Activated CD4-positive, alpha-beta T cell treated with anti-CD3 and anti-CD28 coated beads for 36 hours (primary cell): ENCODE measurements at regions of chr13 and their contacts with region 1.

Region 1: DNA sequence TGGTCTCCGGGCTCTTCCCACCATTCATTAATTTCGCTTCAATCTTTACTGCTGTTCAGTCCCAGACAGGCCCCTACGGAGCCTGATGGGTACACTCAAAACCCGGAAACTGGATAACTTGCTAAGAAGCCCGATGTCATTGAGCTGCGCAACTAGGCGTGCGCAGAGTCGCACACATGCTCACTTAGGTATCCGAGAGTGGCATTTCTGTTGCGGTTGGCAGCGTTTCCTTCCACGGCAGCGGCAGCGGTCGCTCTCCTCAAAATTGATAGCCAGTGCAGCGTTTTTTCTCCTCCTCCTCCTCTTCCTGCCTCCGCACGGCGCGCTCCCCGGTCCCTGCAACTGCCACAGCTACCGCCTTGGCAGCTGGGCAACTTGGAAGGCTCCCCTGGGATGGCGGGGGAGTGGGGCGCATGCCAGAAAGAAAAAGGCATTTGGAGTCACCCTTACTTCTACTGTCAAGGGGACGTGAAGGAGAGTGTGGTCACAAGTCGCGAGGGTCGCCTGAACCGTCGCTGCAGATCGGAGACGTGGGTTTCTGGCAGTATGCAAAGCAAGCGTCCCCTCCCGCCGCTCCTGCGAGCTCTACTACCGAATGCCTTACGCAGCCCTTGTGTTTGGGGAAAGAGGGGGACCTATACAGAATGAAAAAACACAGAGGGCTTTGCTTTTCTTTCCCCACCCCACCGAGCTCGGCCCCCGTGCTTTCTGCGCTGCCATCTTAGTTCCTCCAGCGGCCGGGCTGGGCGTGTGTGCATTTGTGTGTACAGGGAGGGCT is 2.4 kb upstream of the MYCBP2 start:
- DNase-seq: peak; percentile 96
- ATAC-seq: peak; percentile 69
- H3K4me3 Mint-ChIP-seq: peak overlapping the region; percentile 95
- H3K27ac Mint-ChIP-seq: peak overlapping the region; percentile 96
- H3K4me1 Mint-ChIP-seq: peaks cover 42% of the 10 kb centered on the region
- H3K27me3 Mint-ChIP-seq: no peaks in the 10 kb centered on the region

Region 2: DNA sequence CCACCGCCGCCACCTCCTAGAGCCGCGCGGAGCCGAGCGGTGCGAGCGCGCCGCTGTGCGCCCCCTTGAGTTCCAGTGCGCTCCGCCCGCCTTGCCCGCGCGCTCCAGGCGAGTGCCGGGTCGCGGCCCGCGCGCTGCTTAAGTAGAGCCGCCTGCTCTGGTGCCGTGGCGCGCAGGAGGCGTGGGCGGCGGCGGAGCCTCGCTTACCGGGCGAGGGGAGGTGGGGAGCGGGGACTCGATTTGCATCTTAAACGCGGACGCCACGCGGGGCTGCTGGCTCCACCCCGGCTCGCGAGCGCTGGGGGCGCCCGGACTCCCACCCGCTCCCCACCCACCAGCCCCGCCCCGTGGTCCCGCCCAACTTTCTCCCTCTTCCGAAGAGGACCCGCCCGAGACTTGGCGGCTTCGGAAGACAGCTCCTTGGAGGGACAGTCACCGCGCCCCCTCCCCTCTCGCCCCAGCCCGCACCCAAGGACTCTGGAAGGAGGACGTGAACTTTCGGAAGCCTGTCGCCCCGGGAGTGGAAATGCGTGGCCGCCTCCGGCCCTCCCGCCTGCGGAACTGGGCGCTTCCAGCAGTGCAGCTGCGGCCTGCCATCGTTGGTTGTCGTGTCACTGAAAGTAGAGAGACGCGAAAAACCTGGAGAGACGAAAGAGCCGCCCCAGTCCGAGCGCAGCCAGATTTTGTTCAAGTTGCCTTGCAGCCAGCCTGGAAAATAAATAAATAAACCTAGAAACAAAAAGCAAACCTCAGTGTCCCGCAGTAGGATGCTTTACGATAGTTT is 442.8 kb before region 1 on chr13 and contains the start of gene KCTD12:
- CTCF ChIA-PET with region 1: no interaction called
- POLR2A ChIA-PET with region 1: no interaction called
- intact Hi-C with region 1: loop called in 1 of 2 experiments (anchors 1 kb)
- DNase-seq: peak; percentile 86
- ATAC-seq: peak; percentile 78
- H3K4me3 Mint-ChIP-seq: peak within 1 kb of the TSS; percentile 93
- H3K27ac Mint-ChIP-seq: peak within 1 kb of the TSS; percentile 90
- H3K4me1 Mint-ChIP-seq: peaks cover 29% of the 10 kb centered on the region
- H3K27me3 Mint-ChIP-seq: peaks cover 8% of the 10 kb centered on the region
- total RNA-seq, gene KCTD12: 9.9 to 11.1 TPM

Region 3: GRCh38 chr13:77026818-77027585 is 302.3 kb before region 1 on chr13 and contains the start of gene FBXL3:
- CTCF ChIA-PET with region 1: interaction called, 3 read pairs
- POLR2A ChIA-PET with region 1: interaction called, 3 read pairs
- intact Hi-C with region 1: loop called (anchors 1 to 5 kb)
- DNase-seq: peak; percentile 89
- ATAC-seq: peak; percentile 59
- H3K4me3 Mint-ChIP-seq: peak within 1 kb of the TSS; percentile 92
- H3K27ac Mint-ChIP-seq: peak within 1 kb of the TSS; percentile 96
- H3K4me1 Mint-ChIP-seq: peaks cover 47% of the 10 kb centered on the region
- H3K27me3 Mint-ChIP-seq: peaks cover 2% of the 10 kb centered on the region
- total RNA-seq, gene FBXL3: 28.4 to 31.6 TPM

Region 4: DNA sequence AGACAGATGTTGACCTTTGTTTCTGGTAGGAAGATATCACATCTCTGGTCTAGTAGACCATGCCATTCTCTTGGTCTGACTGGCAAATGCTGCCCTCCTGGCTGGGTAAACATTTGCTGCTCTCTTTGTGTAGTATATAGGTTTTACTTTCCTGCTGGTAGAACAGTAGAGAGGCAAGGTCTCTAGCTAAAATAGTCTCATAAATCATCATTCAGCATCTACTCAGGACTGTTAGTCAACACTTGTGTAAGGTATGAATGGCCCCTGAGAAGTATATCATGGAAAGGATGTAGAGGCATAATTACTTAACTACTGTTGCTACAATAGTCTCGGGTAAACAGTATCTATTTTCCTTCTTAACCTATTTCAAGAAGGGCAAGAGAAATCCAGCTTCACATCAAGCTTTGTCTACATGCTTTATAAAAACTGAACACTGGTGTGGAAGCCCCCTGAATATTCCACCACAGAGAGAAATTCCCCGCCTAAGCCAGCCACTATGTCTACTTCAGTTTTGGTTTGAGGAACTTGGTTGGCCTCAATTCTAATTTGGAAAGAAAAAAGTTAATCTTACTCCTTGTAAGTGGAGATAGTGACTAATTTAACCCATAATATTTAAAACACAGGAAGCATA is 15.9 kb after region 1 on chr13:
- CTCF ChIA-PET with region 1: interaction called, 5 read pairs
- POLR2A ChIA-PET with region 1: interaction called, 8 read pairs
- intact Hi-C with region 1: loop called (anchors 1 kb)
- DNase-seq: peak; percentile 33
- ATAC-seq: peak; percentile 90
- H3K4me3 Mint-ChIP-seq: peak overlapping the region; percentile 11
- H3K27ac Mint-ChIP-seq: peak overlapping the region; percentile 72
- H3K4me1 Mint-ChIP-seq: peaks cover 15% of the 10 kb centered on the region
- H3K27me3 Mint-ChIP-seq: no peaks in the 10 kb centered on the region

Region 5: DNA sequence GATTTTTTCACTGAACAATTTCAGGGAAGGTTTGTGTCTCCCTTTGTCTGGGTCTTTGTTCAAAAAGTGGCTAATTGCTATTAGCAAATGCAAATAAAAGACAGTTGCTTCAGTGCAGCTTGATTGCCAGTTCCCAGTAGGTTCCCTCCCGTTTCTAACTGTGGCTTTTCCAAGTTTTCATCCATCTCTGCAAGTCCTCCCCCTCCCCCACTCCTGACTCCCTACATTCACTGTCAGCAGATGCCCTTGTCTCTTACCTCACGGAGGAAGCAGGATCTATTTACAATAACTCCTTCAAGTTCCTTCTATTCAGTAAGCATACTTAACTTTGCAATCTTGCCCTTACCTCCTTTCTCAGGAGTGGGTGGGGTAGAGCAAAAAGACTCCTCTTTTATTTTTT is 150.7 kb after region 1 on chr13:
- CTCF ChIA-PET with region 1: interaction called, 25 read pairs
- POLR2A ChIA-PET with region 1: interaction called, 10 read pairs
- intact Hi-C with region 1: loop called (anchors 1 kb)
- DNase-seq: no peak
- ATAC-seq: no peak
- H3K4me3 Mint-ChIP-seq: no peak overlapping the region
- H3K27ac Mint-ChIP-seq: no peak overlapping the region
- H3K4me1 Mint-ChIP-seq: peaks cover 14% of the 10 kb centered on the region
- H3K27me3 Mint-ChIP-seq: no peaks in the 10 kb centered on the region

Region 6: DNA sequence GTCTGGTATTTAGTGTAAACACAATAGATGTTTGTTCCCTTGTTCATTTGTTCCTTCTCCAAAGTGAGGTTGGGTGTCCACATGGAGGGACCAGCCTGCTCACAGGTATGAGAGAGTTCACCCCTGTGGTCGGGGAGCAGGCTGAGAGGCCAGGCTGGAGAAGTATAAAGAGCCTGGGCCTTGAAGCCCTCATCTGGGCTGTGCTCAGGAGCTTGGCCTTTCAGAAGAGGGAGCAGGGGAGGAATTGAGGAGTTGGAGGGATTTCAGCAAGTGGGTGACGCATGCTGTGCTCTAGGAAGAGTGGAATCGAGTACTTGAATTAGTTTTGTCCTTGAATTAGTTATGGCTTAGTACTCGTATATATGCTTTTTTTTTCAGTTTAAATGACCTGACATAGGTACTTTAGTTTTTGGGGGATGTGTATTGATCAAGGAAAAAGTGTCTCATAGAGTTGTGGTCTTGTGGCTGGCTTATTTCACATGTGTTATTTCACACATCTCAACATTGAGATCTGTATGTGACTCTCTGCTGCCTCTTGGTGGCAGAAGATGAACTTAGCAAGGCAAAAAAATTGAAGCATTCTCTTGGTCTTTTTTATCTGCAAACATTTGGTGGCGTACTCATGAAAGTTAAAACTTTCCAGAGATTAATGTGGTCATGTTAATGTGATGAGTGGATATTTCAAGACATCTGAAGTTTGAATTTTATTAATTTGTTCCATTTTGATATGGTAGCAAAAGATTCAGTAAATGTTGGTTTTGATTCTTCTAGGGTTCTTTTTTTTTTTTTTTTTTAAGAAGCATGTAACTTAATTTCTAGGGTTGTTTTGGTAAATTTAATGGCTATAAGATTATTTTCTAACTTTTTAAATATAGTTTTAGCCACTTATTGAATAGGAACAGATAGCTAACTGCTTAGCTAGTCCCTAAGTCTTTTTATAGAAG is 422.5 kb after region 1 on chr13:
- CTCF ChIA-PET with region 1: no interaction called
- POLR2A ChIA-PET with region 1: no interaction called
- intact Hi-C with region 1: loop called in 1 of 2 experiments (anchors 2 kb)
- DNase-seq: peak; percentile 60
- ATAC-seq: peak; percentile 90
- H3K4me3 Mint-ChIP-seq: no peak overlapping the region
- H3K27ac Mint-ChIP-seq: peak overlapping the region; percentile 28
- H3K4me1 Mint-ChIP-seq: peaks cover 18% of the 10 kb centered on the region
- H3K27me3 Mint-ChIP-seq: no peaks in the 10 kb centered on the region